CD14-positive monocyte (primary cell): ENCODE measurements at regions of chr14 and their contacts with region 1.

Region 1: DNA sequence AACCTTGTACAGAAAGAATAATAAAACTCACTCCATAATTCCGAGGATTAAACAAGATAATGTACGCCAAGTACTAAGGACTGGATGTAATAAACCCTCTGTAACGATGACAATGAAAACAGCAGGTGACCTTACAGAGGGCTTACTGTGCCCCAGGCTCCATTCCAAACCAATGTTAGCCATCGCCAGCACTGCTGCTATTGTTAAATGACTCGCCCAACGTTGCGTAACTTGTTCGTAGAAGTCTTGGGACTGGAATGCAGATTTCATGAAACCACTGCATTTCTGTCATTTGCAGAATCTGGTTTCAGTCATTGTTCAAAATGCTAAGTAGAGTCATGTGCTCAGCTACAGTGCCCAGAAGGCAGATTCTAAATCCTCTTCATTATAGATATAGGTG is 728 bp upstream of the STON2 start:
- DNase-seq: peak; percentile 81 to 92 (median 87)
- H3K4me3 ChIP-seq: peak overlapping the region in 1 of 3 experiments; percentile 20
- H3K4me3 Mint-ChIP-seq: peak overlapping the region in 1 of 2 donors; percentile 87
- H3K27ac ChIP-seq: peak overlapping the region in 1 of 2 donors; percentile 79
- H3K27ac Mint-ChIP-seq: peak overlapping the region; percentile 82 to 95 (median 92)
- H3K4me1 ChIP-seq: peaks cover 33 to 34% of the 10 kb centered on the region in 2 donors
- H3K4me1 Mint-ChIP-seq: peaks cover 40% of the 10 kb centered on the region
- H3K27me3 ChIP-seq: peaks cover 69 to 73% of the 10 kb centered on the region in 2 donors
- H3K27me3 Mint-ChIP-seq: peaks cover 77 to 85% (median 77%) of the 10 kb centered on the region in 3 donors
- CTCF ChIP-seq: no peak

Region 2: DNA sequence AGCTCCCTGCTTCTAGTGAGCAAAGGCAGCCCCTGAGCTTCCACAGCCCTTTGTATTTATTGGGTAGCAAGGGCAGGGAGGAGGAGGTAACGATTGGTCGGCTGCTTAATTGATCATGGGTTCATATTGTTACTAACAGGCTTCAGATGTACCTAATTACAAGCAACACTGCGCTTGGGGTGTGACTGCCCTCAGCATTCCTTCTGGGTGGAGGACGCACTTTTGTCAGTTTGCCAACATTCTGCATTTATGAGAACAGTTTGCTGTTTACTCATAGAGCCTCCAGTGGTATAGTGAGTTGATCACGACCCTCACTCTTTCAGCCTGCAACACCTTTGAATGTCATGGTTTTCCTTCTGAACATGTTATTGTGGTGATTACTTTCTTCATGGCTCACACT is 435.8 kb before region 1 on chr14:
- intact Hi-C with region 1: no loop called
- DNase-seq: no peak
- H3K4me3 ChIP-seq: no peak overlapping the region
- H3K4me3 Mint-ChIP-seq: no peak overlapping the region
- H3K27ac ChIP-seq: no peak overlapping the region
- H3K27ac Mint-ChIP-seq: no peak overlapping the region
- H3K4me1 ChIP-seq: no peaks in the 10 kb centered on the region
- H3K4me1 Mint-ChIP-seq: no peaks in the 10 kb centered on the region
- H3K27me3 ChIP-seq: no peaks in the 10 kb centered on the region
- H3K27me3 Mint-ChIP-seq: peaks cover 2 to 6% (median 2%) of the 10 kb centered on the region in 3 donors
- CTCF ChIP-seq: no peak

Region 3: GRCh38 chr14:81390696-81391095 is 10.2 kb before region 1 on chr14:
- intact Hi-C with region 1: no loop called
- DNase-seq: no peak
- H3K4me3 ChIP-seq: no peak overlapping the region
- H3K4me3 Mint-ChIP-seq: peak overlapping the region in 1 of 2 donors; percentile 49
- H3K27ac ChIP-seq: no peak overlapping the region
- H3K27ac Mint-ChIP-seq: no peak overlapping the region
- H3K4me1 ChIP-seq: no peaks in the 10 kb centered on the region
- H3K4me1 Mint-ChIP-seq: no peaks in the 10 kb centered on the region
- H3K27me3 ChIP-seq: peaks cover 25 to 34% of the 10 kb centered on the region in 2 donors
- H3K27me3 Mint-ChIP-seq: peaks cover 33 to 54% (median 39%) of the 10 kb centered on the region in 3 donors
- CTCF ChIP-seq: no peak

Region 4: GRCh38 chr14:81416194-81416952 is 15.5 kb after region 1 on chr14:
- intact Hi-C with region 1: loop called in 1 of 2 experiments (anchors 2 kb)
- DNase-seq: peak; percentile 89 to 94 (median 94)
- H3K4me3 ChIP-seq: peak overlapping the region in 1 of 3 experiments; percentile 55
- H3K4me3 Mint-ChIP-seq: peak overlapping the region in 1 of 2 donors; percentile 67
- H3K27ac ChIP-seq: peak overlapping the region; percentile 75 to 82
- H3K27ac Mint-ChIP-seq: peak overlapping the region; percentile 51 to 95 (median 90)
- H3K4me1 ChIP-seq: peaks cover 39 to 50% of the 10 kb centered on the region in 2 donors
- H3K4me1 Mint-ChIP-seq: peaks cover 52% of the 10 kb centered on the region
- H3K27me3 ChIP-seq: peaks cover 0 to 4% of the 10 kb centered on the region in 2 donors
- H3K27me3 Mint-ChIP-seq: peaks cover 8 to 21% (median 19%) of the 10 kb centered on the region in 3 donors
- CTCF ChIP-seq: no peak